Natural killer cell (primary cell): ENCODE measurements at regions of chr4 and their contacts with region 1.

Region 1: DNA sequence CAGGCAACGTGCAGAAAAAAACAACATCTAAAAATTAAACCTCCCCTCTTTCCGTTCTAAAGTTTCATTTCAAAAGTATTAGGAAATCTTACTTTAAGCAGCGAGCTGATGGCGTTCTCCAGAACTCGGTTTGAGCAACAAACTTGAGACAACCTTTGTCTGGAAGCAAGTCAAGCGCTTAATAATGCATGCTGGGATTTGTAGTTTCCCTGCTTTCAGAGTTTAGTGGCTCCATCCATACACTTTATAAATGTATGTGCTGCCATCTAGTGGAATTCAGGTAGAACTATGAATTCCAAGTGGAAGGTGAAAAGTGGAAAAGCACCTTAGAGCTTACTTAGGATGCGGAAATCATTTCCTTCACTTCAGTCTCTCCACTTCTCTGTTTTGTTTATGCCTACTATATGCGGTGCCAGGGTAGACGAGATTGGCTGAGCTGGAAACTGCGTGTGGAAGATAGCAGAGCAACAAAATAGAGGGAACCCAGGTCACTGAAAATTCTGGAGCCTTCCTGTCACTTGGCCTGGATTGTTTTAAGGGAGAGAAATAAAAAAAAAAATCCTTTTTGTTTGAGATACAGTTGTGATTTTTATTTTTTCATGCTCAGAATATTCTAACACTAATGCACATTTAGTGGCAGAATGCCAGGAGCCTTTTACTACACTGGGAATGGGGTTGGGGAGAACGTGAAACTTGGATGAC is at the start of gene BDH2:
- DNase-seq: peak in 1 of 2 donors; percentile 89
- ATAC-seq: peak; percentile 98 to 100 (median 100)
- H3K4me3 ChIP-seq: peak within 1 kb of the TSS; percentile 34
- H3K4me3 Mint-ChIP-seq: peak within 1 kb of the TSS; percentile 99
- H3K27ac ChIP-seq: peak within 1 kb of the TSS; percentile 13
- H3K27ac Mint-ChIP-seq: peak within 1 kb of the TSS; percentile 90
- H3K4me1 ChIP-seq: peaks cover 7% of the 10 kb centered on the region
- H3K4me1 Mint-ChIP-seq: peaks cover 19 to 26% of the 10 kb centered on the region in 2 donors
- H3K27me3 ChIP-seq: no peaks in the 10 kb centered on the region
- H3K27me3 Mint-ChIP-seq: no peaks in the 10 kb centered on the region
- CTCF ChIP-seq: peak; percentile 82
- total RNA-seq, gene BDH2: 12.1 to 16.6 (median 15.9) TPM

Region 2: DNA sequence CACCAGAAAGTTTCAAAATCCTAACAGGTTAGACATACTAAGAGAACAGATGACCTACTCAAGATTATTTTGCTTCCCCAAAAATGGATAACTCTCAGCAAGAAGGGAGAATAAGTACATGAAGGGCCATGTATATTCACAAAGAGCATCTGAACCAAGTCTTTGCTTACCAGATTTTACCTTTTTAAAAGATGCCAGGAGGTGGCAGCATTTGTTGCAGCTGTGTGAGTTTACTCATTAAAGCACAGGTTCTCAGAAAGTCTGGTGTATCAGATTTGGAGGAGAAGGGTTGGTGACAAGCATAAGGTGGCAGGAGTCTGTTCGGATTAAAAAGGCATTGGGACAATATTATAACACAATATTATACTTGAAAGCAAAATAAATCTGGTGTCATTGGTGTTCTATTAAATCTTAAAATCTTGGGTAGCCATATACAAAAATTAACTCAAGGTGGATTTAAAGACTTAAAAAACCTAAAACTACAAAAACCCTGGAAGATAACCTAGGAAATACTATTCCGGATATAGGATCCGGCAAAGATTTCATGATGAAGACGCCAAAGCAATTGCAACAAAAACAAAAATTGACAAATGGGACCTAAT is 650.0 kb before region 1 on chr4:
- intact Hi-C with region 1: loop called (anchors 5 kb)
- DNase-seq: peak in 1 of 2 donors; percentile 84
- ATAC-seq: peak; percentile 62 to 89 (median 73)
- H3K4me3 ChIP-seq: no peak overlapping the region
- H3K4me3 Mint-ChIP-seq: no peak overlapping the region
- H3K27ac ChIP-seq: no peak overlapping the region
- H3K27ac Mint-ChIP-seq: no peak overlapping the region
- H3K4me1 ChIP-seq: peaks cover 3% of the 10 kb centered on the region
- H3K4me1 Mint-ChIP-seq: peaks cover 8% of the 10 kb centered on the region in 2 donors
- H3K27me3 ChIP-seq: no peaks in the 10 kb centered on the region
- H3K27me3 Mint-ChIP-seq: no peaks in the 10 kb centered on the region
- CTCF ChIP-seq: peak; percentile 61

Region 3: DNA sequence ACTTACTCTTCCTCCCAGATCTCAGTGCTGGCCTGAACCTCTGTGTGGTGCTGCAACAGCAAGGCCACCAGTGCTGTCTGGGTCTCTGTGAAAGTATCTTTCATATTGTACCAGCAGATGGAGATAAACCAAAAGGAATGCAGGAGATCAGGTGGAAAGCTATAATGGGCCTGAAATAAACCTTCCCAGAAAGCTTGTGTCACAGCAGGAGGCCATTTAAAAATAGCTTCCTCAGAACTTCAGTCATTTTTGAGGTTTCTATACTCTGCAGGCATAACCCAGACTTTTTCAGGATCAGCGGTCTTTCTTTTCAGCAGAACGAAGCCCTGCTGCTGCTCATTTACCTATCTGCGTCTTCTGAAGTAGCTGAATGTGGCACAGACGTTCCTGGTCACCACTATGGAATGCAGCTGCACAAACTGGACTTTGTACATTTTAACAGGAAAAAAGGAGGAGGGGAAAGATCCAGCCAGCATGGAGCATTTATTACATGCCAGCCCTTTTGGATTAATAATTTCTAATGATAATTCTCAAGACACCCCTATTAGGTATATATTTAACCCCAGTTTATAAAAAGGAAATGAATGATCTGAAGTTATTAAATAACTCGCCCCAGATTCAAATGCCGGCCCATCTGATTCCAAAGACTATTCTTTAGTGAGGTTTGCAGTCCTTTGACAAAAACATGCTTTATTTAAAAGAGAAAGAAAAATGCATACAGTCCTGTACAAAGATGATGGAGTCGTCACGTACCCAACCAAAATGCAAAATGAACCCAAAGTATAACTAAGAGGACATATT is 478.9 kb before region 1 on chr4:
- intact Hi-C with region 1: loop called (anchors 10 kb)
- DNase-seq: peak in 1 of 2 donors; percentile 55
- ATAC-seq: peak in 1 of 3 donors; percentile 9
- H3K4me3 ChIP-seq: no peak overlapping the region
- H3K4me3 Mint-ChIP-seq: no peak overlapping the region
- H3K27ac ChIP-seq: no peak overlapping the region
- H3K27ac Mint-ChIP-seq: no peak overlapping the region
- H3K4me1 ChIP-seq: peaks cover 4% of the 10 kb centered on the region
- H3K4me1 Mint-ChIP-seq: peaks cover 5 to 7% of the 10 kb centered on the region in 2 donors
- H3K27me3 ChIP-seq: no peaks in the 10 kb centered on the region
- H3K27me3 Mint-ChIP-seq: no peaks in the 10 kb centered on the region
- CTCF ChIP-seq: no peak

Region 4: DNA sequence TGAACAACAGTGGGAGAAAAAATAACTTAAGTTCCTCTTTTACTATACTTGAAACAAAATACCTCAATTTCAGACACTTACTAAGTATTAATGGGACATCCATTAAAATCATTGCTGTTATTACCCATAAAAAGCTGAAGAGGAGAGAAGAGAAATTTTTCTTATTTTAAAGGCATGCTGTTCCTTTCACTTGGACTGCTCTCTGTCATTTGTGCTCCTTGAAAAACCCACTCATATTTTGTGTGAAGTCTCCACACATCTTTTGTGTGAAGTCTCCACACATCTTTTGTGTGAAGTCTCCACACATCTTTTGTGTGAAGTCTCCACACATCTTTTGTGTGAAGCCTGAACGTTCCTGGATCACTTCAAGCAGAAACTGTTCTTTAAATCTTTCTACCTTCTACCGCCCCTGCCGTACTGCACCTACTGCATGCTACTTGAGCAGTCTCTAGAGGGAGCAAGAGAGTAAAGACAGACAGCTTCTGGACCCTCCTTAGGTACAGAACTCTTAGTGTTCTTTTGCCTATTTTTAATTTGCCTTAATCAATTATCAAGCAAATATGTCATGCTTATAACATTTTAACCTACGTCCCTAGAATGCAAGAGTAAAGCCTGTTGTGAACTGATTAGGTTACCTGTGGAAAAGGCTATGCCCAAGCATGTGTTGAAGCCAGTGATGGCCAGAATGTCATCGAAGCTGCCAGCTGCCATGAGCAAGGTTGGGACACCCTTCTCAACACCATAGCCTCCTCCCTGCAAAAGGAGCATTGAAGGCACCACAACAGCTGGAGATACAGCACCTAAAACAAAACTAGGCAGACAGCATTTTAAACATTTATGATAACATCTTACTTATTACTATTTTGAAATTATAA is 53.2 kb before region 1 on chr4:
- intact Hi-C with region 1: loop called (anchors 2 kb)
- DNase-seq: peak in 1 of 2 donors; percentile 71
- ATAC-seq: peak; percentile 93 to 100 (median 99)
- H3K4me3 ChIP-seq: no peak overlapping the region
- H3K4me3 Mint-ChIP-seq: no peak overlapping the region
- H3K27ac ChIP-seq: no peak overlapping the region
- H3K27ac Mint-ChIP-seq: no peak overlapping the region
- H3K4me1 ChIP-seq: no peaks in the 10 kb centered on the region
- H3K4me1 Mint-ChIP-seq: no peaks in the 10 kb centered on the region
- H3K27me3 ChIP-seq: no peaks in the 10 kb centered on the region
- H3K27me3 Mint-ChIP-seq: no peaks in the 10 kb centered on the region
- CTCF ChIP-seq: peak; percentile 70

Region 5: GRCh38 chr4:103123114-103123513 is 23.3 kb after region 1 on chr4:
- intact Hi-C with region 1: no loop called
- DNase-seq: no peak
- ATAC-seq: no peak
- H3K4me3 ChIP-seq: no peak overlapping the region
- H3K4me3 Mint-ChIP-seq: no peak overlapping the region
- H3K27ac ChIP-seq: no peak overlapping the region
- H3K27ac Mint-ChIP-seq: no peak overlapping the region
- H3K4me1 ChIP-seq: no peaks in the 10 kb centered on the region
- H3K4me1 Mint-ChIP-seq: no peaks in the 10 kb centered on the region
- H3K27me3 ChIP-seq: no peaks in the 10 kb centered on the region
- H3K27me3 Mint-ChIP-seq: no peaks in the 10 kb centered on the region
- CTCF ChIP-seq: no peak